Keratinocyte (primary cell): ENCODE measurements at regions of chr7 and their contacts with region 1.

Region 1: DNA sequence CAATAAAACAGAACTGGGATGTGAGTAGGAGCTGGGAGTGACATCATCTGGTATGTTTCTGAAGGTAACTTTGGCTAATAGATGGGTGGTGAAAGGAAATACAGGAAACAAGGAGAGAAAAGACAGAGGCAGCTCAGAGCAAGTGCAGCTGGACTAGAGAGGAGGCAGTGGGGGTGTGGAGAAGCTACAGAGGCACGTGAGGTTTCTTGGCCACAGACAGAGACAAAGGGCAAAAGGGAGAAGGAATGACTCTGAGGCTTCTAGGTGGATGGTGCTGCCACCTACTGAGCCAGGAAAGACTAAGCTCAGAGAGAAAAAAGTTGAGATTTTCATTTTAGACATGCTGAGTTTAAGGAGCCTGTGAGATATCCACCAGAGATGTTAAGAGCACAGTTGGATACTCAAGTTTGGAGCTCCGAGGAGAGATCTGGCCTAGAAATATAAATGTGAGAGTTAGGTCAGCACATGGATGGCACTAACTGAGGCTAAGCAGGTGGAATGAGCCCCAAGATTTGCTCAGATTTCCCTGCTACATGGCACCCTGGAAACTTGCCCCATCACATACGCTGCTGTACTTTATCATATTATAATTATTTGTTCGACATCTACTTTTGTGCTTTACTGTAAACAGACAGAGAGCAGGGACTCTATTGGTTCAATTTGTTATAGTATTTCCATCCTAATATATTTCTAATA is 293.0 kb upstream of the IMMP2L start:
- DNase-seq: no peak
- H3K4me3 ChIP-seq: no peak overlapping the region
- H3K27ac ChIP-seq: no peak overlapping the region
- H3K4me1 ChIP-seq: no peaks in the 10 kb centered on the region
- H3K27me3 ChIP-seq: no peaks in the 10 kb centered on the region
- CTCF ChIP-seq: peak; percentile 63 to 66 (median 64)

Region 2: DNA sequence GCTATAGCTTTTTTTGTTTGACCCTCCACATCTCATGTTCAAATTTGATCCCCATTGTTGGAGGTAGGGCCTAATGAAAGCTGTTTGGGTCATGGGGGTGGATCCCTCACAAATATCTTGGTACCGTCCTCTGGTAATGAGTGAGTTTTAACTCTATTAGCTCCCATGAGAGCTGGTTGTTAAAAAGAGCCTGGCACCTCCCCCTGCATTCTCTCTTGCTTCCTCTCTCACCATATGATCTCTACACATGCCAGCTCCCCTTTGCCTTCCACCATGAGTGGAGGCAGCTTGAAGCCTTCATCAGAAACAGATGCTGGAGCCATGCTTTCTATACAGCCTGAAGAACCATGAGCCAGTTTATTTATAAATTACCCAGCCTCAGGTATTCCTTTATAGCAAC is 250.1 kb before region 1 on chr7:
- dilution Hi-C with region 1: no loop called
- DNase-seq: no peak
- H3K4me3 ChIP-seq: no peak overlapping the region
- H3K27ac ChIP-seq: no peak overlapping the region
- H3K4me1 ChIP-seq: no peaks in the 10 kb centered on the region
- H3K27me3 ChIP-seq: no peaks in the 10 kb centered on the region
- CTCF ChIP-seq: no peak

Region 3: GRCh38 chr7:111752022-111752582 is 103.2 kb before region 1 on chr7:
- dilution Hi-C with region 1: loop called (anchors 25 kb)
- DNase-seq: peak; percentile 9
- H3K4me3 ChIP-seq: no peak overlapping the region
- H3K27ac ChIP-seq: no peak overlapping the region
- H3K4me1 ChIP-seq: no peaks in the 10 kb centered on the region
- H3K27me3 ChIP-seq: no peaks in the 10 kb centered on the region
- CTCF ChIP-seq: peak; percentile 84 to 87 (median 84)

Region 4: DNA sequence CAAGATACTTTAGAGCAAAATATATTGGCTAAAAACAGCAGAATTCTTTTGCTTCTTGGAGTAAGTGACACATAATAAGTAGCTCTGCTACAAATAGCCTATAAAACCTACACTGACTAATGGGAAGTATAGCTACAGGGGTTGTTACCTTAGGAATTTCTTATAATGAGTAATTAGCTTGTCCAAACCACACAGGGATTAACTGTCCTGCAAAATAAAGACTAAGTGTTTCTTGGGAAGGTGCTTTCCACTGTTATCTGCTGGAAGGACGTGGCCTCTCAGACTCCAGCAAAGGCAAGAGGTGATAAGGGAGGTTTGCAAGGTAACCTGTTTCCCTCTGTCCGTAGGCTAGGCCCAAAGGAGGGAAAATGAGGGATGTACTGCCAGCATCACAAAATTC is 48.5 kb after region 1 on chr7:
- dilution Hi-C with region 1: no loop called
- DNase-seq: peak; percentile 2
- H3K4me3 ChIP-seq: no peak overlapping the region
- H3K27ac ChIP-seq: no peak overlapping the region
- H3K4me1 ChIP-seq: peaks cover 15% of the 10 kb centered on the region
- H3K27me3 ChIP-seq: no peaks in the 10 kb centered on the region
- CTCF ChIP-seq: no peak